Activated naive CD4-positive, alpha-beta T cell treated with anti-CD3 and anti-CD28 coated beads, Interleukin-2, amount 10 ng/mL, durations not matched to agents 7 days and 5 days (primary cell): ENCODE measurements at regions of chr1 and their contacts with region 1.

Region 1: DNA sequence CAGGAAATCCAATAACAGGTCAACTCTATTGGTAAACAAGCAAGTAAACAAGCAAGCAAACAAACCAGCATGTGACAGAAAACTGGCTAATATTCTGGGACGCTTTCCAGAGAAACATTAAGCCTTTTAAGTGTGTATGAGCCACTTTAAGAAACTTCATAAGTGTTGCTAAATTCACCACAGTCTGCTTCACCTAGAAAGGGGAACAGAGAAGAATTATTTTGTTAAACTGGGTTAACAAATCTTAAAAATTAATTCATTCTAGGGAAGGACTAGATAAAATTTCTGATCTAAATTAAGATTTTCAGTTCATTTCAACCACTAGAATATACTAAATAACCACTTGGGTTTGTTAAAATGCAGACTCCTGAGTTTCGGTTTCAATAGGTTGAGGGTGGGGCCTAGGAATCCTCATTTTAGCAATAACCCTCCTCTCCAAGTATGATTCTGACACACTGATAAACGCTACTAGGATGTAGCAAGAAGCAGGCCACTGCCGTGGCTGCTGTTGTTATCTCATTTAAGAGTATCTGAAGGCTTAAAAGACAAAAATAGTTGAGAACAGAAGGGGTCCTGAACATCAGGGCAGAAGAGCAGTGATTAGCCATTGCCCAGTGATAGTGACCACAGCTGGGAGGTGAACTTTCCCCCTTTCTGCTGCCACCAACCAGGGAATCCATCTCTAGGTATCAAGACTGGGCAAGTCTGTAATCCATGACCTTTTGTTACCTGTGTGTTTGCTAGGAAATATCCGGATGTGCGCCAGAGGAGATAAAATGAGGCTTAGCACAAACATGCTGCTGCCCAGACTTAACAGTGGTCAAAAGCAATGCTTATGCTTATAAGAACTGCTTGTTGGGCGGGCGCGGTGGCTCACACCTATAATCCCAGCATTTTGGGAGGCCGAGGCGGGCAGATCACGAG is 11.2 kb downstream of the CREG1 start:
- DNase-seq: no peak
- H3K4me3 Mint-ChIP-seq: no peak overlapping the region
- H3K27ac Mint-ChIP-seq: peak overlapping the region; percentile 2
- H3K4me1 Mint-ChIP-seq: peaks cover 51% of the 10 kb centered on the region
- H3K27me3 Mint-ChIP-seq: no peaks in the 10 kb centered on the region

Region 2: GRCh38 chr1:167342846-167343245 is 199.5 kb before region 1 on chr1:
- CTCF ChIA-PET with region 1: no interaction called
- DNase-seq: no peak
- H3K4me3 Mint-ChIP-seq: no peak overlapping the region
- H3K27ac Mint-ChIP-seq: no peak overlapping the region
- H3K4me1 Mint-ChIP-seq: peaks cover 3% of the 10 kb centered on the region
- H3K27me3 Mint-ChIP-seq: no peaks in the 10 kb centered on the region

Region 3: GRCh38 chr1:167401260-167401873 is 141.0 kb before region 1 on chr1:
- CTCF ChIA-PET with region 1: interaction called, 20 read pairs
- DNase-seq: peak; percentile 65
- H3K4me3 Mint-ChIP-seq: no peak overlapping the region
- H3K27ac Mint-ChIP-seq: no peak overlapping the region
- H3K4me1 Mint-ChIP-seq: peaks cover 4% of the 10 kb centered on the region
- H3K27me3 Mint-ChIP-seq: no peaks in the 10 kb centered on the region

Region 4: GRCh38 chr1:167442124-167442848 is 100.1 kb before region 1 on chr1:
- CTCF ChIA-PET with region 1: interaction called, 10 read pairs
- DNase-seq: peak; percentile 92
- H3K4me3 Mint-ChIP-seq: no peak overlapping the region
- H3K27ac Mint-ChIP-seq: peak overlapping the region; percentile 80
- H3K4me1 Mint-ChIP-seq: peaks cover 95% of the 10 kb centered on the region
- H3K27me3 Mint-ChIP-seq: no peaks in the 10 kb centered on the region

Region 5: DNA sequence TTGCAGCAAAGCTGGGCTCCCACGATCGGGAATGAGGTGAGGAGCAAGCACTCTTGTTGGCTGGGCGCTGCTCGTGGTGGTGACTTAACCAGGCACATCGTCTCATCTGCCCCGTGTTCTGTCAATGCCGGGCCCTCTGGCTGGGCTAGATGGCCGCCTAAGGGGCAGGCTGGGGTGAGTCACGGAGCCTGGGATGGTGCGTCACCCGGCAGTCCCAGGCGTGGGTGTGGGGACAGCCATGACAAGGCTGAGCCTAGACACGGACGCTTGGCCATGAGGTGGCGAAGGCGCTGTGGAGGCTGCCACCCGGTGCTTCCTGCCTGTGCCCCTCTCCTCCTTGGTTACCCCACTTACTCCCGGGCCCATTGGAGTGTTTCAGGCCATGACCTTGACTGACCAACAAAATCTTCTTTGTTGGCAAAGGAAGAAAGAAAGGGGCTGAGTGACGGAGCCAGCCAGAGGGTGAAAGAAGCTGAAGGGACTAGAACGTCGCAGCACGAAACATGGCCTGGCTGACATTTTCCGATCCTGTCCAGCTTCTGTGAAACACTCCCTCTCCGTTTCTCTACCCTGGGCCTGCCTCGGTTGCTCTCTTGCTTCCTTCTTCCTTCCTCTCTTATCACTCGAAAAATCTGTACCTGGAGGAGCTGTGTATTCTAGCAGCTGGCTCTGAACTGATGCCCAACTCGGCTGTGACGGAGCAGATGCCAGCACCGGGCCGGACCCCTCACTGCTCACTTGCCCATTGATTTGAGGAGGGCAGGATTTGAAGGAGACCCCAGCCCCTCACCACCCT is 24.6 kb before region 1 on chr1:
- CTCF ChIA-PET with region 1: interaction called, 15 read pairs
- DNase-seq: peak; percentile 87
- H3K4me3 Mint-ChIP-seq: peak overlapping the region; percentile 99
- H3K27ac Mint-ChIP-seq: peak overlapping the region; percentile 100
- H3K4me1 Mint-ChIP-seq: peaks cover 45% of the 10 kb centered on the region
- H3K27me3 Mint-ChIP-seq: no peaks in the 10 kb centered on the region

Region 6: DNA sequence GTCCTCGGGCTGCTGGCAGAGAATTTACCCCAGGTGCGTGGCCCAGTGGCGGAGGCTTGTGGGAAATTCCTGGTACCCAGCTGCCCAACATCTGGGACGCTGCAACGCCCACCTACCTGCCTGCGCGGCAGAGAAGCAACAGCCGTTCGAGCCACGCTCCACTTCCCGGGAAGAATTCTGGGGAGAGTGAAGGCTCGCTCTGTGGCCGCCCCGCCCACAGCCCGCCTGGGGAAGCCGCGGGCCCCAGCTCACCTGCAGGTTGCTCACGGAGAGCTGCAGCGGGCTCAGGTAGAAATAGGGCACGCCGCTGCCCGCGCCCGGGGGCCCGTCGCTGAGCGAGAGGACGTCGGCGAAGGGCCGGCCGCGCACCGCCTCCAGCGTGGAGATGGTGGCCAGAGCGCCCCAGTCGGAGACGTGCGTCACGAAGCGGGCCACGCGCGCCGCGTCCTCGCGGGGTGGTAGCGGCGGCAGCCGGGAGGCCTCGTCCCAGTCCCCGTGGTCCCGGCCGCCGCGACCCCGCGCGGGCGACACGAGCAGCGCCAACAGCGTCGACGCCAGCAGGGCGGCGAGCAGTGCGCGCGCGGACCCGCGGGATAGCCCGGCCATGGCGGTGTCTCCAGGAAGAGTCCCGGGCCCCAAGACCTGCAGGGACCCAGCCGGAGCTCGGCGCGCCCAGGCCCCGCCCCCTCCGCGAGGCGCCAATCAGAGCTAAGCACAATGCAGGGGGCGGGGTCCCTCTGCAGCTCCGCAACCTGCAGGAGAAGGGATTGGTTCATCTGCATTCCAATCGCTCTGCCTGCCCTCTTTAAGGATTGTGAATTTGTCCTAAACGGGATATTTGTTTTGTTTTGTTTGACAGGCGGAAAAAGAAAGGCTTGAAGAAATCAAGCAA is 11.0 kb after region 1 on chr1 and contains the start of gene CREG1:
- CTCF ChIA-PET with region 1: interaction called, 33 read pairs
- DNase-seq: peak; percentile 96
- H3K4me3 Mint-ChIP-seq: peak within 1 kb of the TSS; percentile 84
- H3K27ac Mint-ChIP-seq: peak within 1 kb of the TSS; percentile 83
- H3K4me1 Mint-ChIP-seq: peaks cover 26% of the 10 kb centered on the region
- H3K27me3 Mint-ChIP-seq: peaks cover 14% of the 10 kb centered on the region

Region 7: DNA sequence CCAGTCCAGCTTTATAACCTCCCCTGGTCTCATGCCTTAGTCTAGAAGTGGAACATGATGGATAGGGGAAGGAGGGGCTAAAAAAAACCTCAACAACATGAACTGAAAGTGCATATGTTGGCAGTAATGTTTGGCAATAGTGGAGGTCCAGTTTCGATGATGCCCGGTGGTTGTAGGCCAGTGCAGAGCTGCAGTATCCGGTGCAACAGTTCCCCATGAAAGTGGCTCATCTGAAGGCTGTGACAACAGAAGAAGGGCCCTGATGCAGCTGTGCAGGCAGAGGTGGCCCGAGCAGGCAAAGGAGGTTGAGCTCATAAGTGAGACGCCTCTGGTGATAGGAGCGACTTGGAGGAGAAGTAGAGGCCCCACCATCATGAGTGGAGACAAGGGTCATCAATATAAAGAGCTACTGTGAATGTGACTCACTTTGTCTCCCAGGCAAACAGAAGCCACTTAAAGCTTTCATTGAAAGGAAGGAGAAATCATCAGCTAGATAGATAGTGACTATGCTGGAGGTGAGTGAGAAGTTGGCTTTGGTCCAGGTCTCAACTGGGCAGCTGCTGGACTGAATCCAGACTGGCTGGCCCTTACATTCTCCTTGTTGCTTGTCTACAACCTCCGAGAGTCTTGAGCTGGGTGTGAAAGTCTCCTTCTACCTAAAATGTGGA is 21.3 kb after region 1 on chr1:
- CTCF ChIA-PET with region 1: interaction called, 11 read pairs
- DNase-seq: no peak
- H3K4me3 Mint-ChIP-seq: no peak overlapping the region
- H3K27ac Mint-ChIP-seq: no peak overlapping the region
- H3K4me1 Mint-ChIP-seq: no peaks in the 10 kb centered on the region
- H3K27me3 Mint-ChIP-seq: peaks cover 21% of the 10 kb centered on the region